H1 (cell line): ENCODE measurements at regions of chr16 and their contacts with region 1.

Region 1: DNA sequence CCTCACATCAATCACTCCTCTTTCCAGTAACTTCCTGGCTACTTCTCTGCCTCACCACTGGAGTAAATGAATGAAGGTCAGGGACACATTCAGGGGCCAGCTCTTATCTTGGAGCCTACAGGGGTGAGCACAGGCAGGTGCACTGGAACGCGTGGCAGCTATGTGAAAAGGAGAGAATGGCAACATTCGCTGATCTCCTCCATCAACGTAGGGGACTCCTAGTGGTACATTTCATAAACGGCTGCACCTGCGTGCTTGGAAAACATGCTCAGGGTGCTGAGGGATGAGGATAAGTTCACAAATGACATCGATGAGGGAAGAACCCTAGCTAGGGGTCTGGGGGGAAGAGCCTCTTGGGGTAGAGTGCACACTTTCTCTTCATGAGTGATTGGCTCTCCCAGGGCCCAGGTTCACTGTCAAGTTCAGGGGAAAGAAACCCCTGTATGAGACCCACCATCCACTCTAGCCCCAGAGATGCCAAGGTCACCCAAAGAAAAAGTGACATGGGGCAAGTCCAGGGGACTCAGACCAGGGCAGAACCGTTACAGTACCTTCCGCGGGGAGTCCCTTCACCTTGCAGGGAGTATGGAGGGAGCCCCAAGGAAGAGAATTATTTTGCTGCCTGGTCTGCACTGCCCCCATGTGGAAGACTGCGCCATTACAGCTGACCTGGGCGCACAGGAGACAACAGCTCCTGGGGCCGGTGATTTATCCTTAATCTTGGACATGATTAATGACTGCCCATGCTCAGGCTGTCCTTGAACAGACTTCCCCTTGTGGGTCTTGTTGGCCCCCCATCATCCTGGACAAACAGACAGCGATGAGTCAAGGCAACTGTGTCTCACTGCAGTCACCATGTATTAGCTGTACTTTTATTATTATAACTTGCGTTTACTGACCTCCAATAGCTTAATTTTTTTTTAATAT is 30.1 kb downstream of the VAC14 start:
- DNase-seq: peak in 1 of 2 experiments; percentile 96
- H3K4me3 ChIP-seq: no peak overlapping the region
- H3K27ac ChIP-seq: no peak overlapping the region
- H3K4me1 ChIP-seq: no peaks in the 10 kb centered on the region
- H3K27me3 ChIP-seq: no peaks in the 10 kb centered on the region
- CTCF ChIP-seq: peak; percentile 95 to 97 (median 95)
- EP300 ChIP-seq: no peak
- POLR2A ChIP-seq: no peak
- RAD21 ChIP-seq: peak; percentile 93 to 95

Region 2: DNA sequence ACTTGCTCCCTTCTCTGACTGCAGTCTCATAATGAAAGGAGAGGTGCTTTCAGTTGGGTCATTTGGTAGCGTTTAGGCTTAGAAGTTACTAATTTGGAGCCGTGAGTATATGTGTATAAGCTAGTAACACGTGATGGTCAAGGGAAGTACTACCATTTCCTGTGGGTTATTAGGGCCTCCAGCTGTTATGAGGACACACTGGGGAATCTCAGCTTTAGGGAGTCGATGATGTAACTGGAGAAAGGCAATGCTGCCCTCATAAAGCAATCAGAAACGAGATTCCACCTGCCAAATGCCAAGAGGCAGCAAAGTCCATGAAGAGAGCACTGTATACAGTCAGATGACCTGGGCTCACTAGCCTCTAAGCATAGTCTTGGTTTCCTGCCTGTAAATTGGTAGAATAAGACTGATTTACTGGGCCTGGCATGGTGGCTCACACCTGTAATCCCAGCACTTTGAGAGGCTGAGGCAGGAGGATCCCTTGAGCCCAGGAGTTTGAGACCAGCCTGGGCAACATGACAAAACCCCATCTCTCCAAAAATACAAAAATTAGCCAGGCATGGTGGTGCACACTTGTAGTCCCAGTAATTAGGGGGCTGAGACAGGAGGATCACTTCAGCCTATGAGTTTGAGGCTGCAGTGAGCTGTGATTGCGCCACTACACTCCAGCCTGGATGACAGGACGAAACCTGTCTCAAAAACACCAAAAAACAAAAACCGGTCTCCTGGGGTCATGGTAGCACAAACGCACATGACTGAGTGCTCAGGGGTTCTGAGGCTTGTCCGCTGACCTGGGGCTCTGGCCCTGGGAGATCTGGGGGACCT is 194.2 kb before region 1 on chr16:
- CTCF ChIA-PET with region 1: interaction called, 10 read pairs
- POLR2A ChIA-PET with region 1: interaction called, 3 read pairs
- DNase-seq: no peak
- H3K4me3 ChIP-seq: no peak overlapping the region
- H3K27ac ChIP-seq: no peak overlapping the region
- H3K4me1 ChIP-seq: no peaks in the 10 kb centered on the region; a peak in 1 of 7 replicates
- H3K27me3 ChIP-seq: no peaks in the 10 kb centered on the region
- CTCF ChIP-seq: no peak
- EP300 ChIP-seq: no peak
- POLR2A ChIP-seq: peak; percentile 38 to 53; a peak in 1 of 3 replicates
- RAD21 ChIP-seq: no peak

Region 3: DNA sequence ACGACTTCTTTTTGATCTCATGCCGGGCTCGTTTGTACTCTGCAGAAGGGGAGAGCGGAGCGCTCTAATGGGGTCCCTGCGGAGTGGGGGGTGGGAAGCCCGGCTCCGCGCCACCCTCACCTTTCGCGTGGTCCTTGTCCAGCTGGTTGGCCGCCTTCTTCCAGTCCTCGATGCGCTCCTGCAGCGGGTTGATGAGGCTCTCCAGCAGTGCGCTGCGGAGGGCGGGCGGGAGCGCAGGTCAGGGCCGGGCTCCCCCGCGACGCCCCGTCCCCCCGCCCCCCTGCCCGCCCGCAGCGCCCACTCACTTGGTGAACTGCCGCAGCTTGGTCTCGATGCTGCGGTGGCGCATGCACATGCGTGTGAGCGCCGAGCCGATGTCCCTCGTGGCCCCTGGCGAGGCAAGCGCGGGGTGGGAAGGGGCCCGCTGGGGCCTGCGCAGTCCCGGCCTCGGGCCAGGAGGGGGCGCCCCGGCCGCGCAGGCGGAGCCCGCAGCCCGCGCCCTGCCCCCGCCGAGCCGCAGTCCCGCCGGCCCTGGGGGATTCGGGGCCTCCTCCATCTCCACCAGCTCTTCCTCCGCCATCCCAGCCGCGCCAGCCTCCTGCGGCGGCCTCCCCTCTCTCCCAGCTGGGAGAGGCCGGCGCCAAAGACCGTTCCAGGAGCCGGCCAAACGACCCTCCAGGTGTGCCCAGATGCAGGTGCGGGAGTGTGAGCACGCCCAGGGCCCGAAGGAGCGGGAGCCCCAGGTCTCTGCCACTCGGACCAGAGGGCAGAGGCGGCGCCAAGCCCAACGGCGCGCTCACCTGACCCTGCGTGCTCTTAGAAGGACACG is 91.0 kb before region 1 on chr16:
- CTCF ChIA-PET with region 1: interaction called, 141 read pairs
- POLR2A ChIA-PET with region 1: interaction called, 5 read pairs
- DNase-seq: peak in 1 of 2 experiments; percentile 84
- H3K4me3 ChIP-seq: peak overlapping the region in 1 of 4 experiments; percentile 47; a peak in 2 of 8 replicates
- H3K27ac ChIP-seq: no peak overlapping the region
- H3K4me1 ChIP-seq: peaks cover 0 to 14% (median 4%) of the 10 kb centered on the region in 4 experiments; a peak in 5 of 7 replicates
- H3K27me3 ChIP-seq: peaks cover 0 to 5% (median 3%) of the 10 kb centered on the region in 4 experiments; a peak in 4 of 7 replicates
- CTCF ChIP-seq: peak in 2 of 3 experiments; percentile 73 to 86; a peak in 3 of 4 replicates
- EP300 ChIP-seq: no peak
- POLR2A ChIP-seq: no peak
- RAD21 ChIP-seq: peak; percentile 47 to 82

Region 4: GRCh38 chr16:70703041-70703834 is 67.7 kb before region 1 on chr16:
- CTCF ChIA-PET with region 1: interaction called, 13 read pairs
- POLR2A ChIA-PET with region 1: no interaction called
- DNase-seq: no peak
- H3K4me3 ChIP-seq: no peak overlapping the region
- H3K27ac ChIP-seq: no peak overlapping the region
- H3K4me1 ChIP-seq: peaks cover 0 to 14% (median 9%) of the 10 kb centered on the region in 4 experiments; a peak in 5 of 7 replicates
- H3K27me3 ChIP-seq: no peaks in the 10 kb centered on the region
- CTCF ChIP-seq: peak in 1 of 3 experiments; percentile 16; a peak in 1 of 4 replicates
- EP300 ChIP-seq: no peak
- POLR2A ChIP-seq: no peak
- RAD21 ChIP-seq: no peak

Region 5: DNA sequence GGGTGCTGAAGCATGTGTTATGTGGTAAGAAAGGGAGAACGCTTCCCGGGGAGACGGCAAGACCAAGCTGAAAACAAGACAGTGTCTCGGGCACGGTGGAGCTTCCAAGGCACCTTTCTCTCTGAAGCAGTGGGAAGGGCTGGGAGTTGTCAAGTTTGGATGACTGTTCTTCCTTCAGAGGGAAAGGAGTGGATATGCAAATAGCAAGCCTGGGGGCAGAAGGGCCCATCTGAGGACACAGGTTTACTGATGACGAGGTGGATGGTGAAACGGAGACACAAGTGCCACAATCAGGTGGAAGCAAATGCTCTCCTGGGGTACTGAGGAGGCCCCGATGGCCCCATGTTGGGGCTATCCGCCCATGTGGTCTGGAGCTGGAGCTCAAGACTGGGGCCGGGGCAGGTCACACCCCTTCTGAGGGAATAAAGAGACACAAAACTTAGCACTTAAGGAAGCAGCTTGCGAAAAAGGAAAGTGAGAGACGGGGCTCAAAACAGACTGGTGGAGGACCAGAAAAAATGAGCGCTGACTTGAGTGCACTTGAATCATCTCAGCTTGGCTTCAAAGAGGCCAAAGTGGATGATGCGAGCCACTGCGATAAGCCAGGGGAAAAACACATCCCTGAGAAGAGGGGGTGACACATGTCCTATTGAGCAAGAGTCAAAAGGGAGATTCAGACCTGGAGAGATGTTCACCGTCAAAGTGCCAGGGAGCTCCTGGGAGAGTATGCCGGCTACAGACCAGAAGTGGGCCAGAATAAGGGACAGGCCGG is 50.3 kb before region 1 on chr16:
- CTCF ChIA-PET with region 1: interaction called, 14 read pairs
- POLR2A ChIA-PET with region 1: no interaction called
- DNase-seq: no peak
- H3K4me3 ChIP-seq: no peak overlapping the region
- H3K27ac ChIP-seq: no peak overlapping the region
- H3K4me1 ChIP-seq: peaks cover 0 to 8% (median 3%) of the 10 kb centered on the region in 4 experiments; a peak in 5 of 7 replicates
- H3K27me3 ChIP-seq: no peaks in the 10 kb centered on the region
- CTCF ChIP-seq: no peak
- EP300 ChIP-seq: no peak
- POLR2A ChIP-seq: no peak
- RAD21 ChIP-seq: no peak

Region 6: GRCh38 chr16:70750893-70751475 is 19.9 kb before region 1 on chr16:
- CTCF ChIA-PET with region 1: interaction called, 57 read pairs
- POLR2A ChIA-PET with region 1: interaction called, 3 read pairs
- DNase-seq: no peak
- H3K4me3 ChIP-seq: no peak overlapping the region
- H3K27ac ChIP-seq: no peak overlapping the region
- H3K4me1 ChIP-seq: peaks cover 0 to 10% (median 6%) of the 10 kb centered on the region in 4 experiments; a peak in 5 of 7 replicates
- H3K27me3 ChIP-seq: no peaks in the 10 kb centered on the region
- CTCF ChIP-seq: no peak
- EP300 ChIP-seq: no peak
- POLR2A ChIP-seq: no peak
- RAD21 ChIP-seq: no peak

Region 7: GRCh38 chr16:70789226-70789926 is 18.5 kb after region 1 on chr16:
- CTCF ChIA-PET with region 1: interaction called, 19 read pairs
- POLR2A ChIA-PET with region 1: no interaction called
- DNase-seq: peak in 1 of 2 experiments; percentile 60
- H3K4me3 ChIP-seq: no peak overlapping the region
- H3K27ac ChIP-seq: peak overlapping the region; percentile 46; the same call in 1 of the 2 replicates
- H3K4me1 ChIP-seq: no peaks in the 10 kb centered on the region; a peak in 2 of 7 replicates
- H3K27me3 ChIP-seq: no peaks in the 10 kb centered on the region
- CTCF ChIP-seq: no peak
- EP300 ChIP-seq: no peak
- POLR2A ChIP-seq: no peak
- RAD21 ChIP-seq: no peak